Dorsolateral prefrontal cortex (tissue), 120 donors: ENCODE measurements at regions of chr9 and their contacts with region 1.

Region 1: GRCh38 chr9:36328798-36329411 is 70.7 kb upstream of the GNE start:
- DNase-seq: peak in 2 of 10 donors; percentile 28 to 49
- H3K4me3 ChIP-seq: peak overlapping the region in 6 of 59 donors; percentile 6 to 34 (median 15)
- H3K27ac ChIP-seq: peak overlapping the region in 1 of 59 donors; percentile 4
- H3K27me3 ChIP-seq: no peaks in the 10 kb centered on the region
- CTCF ChIP-seq: peak; percentile 72 to 96 (median 88)

Region 2: GRCh38 chr9:36190388-36191287 is 138.3 kb before region 1 on chr9 and contains the start of gene CLTA:
- intact Hi-C with region 1: loop called (anchors 5 kb)
- DNase-seq: peak; percentile 93 to 99 (median 98)
- H3K4me3 ChIP-seq: peak within 1 kb of the TSS; percentile 68 to 100 (median 93)
- H3K27ac ChIP-seq: peak within 1 kb of the TSS; percentile 74 to 98 (median 93)
- H3K27me3 ChIP-seq: no peaks in the 10 kb centered on the region
- CTCF ChIP-seq: peak; percentile 43 to 82 (median 70)
- total RNA-seq, gene CLTA: 76.4 to 215 (median 173) TPM

Region 3: GRCh38 chr9:36245906-36246305 is 83.0 kb before region 1 on chr9:
- intact Hi-C with region 1: loop called (anchors 2 to 5 kb)
- DNase-seq: no peak
- H3K4me3 ChIP-seq: no peak overlapping the region
- H3K27ac ChIP-seq: peak overlapping the region in 23 of 59 donors; percentile 0 to 60 (median 37)
- H3K27me3 ChIP-seq: no peaks in the 10 kb centered on the region
- CTCF ChIP-seq: no peak

Region 4: DNA sequence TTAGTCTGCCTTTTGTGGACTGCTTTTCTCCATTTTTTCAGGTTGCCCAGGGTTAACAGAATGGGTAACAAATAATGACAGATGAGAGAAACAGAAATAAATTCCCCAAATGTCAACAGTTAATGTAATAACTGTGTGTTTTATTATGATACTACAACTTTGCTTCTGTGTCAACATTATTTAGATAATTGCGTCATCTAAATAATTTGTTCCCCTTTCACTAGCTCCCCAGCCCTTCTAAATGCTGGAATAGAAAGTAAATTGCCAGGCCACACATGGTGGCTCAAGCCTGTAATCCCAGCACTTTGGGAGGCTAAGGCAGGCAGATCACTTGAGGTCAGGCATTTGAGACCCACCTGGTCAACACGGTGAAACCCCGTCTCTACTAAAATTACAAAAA is 17.7 kb after region 1 on chr9:
- intact Hi-C with region 1: no loop called
- DNase-seq: no peak
- H3K4me3 ChIP-seq: no peak overlapping the region
- H3K27ac ChIP-seq: no peak overlapping the region
- H3K27me3 ChIP-seq: no peaks in the 10 kb centered on the region
- CTCF ChIP-seq: no peak